ENCODE measurements at regions of chr2 and their contacts with region 1.

Region 1: GRCh38 chr2:32772638-32773447 is 145.0 kb downstream of the TTC27 start:
- DNase-seq: no peak
- H3K4me3 ChIP-seq: no peak overlapping the region
- H3K27ac ChIP-seq: no peak overlapping the region
- H3K4me1 ChIP-seq: no peaks in the 10 kb centered on the region
- H3K27me3 ChIP-seq: no peaks in the 10 kb centered on the region
- CTCF ChIP-seq: peak in 2 of 3 donors; percentile 18 to 47
- EP300 ChIP-seq: no peak
- POLR2A ChIP-seq: no peak

Region 2: GRCh38 chr2:32553829-32554432 is 218.9 kb before region 1 on chr2:
- intact Hi-C with region 1: no loop called
- DNase-seq: no peak
- H3K4me3 ChIP-seq: no peak overlapping the region
- H3K27ac ChIP-seq: no peak overlapping the region
- H3K4me1 ChIP-seq: no peaks in the 10 kb centered on the region
- H3K27me3 ChIP-seq: no peaks in the 10 kb centered on the region
- CTCF ChIP-seq: peak; percentile 32 to 54 (median 49)
- EP300 ChIP-seq: no peak
- POLR2A ChIP-seq: no peak

Region 3: GRCh38 chr2:32946314-32947075 is 173.7 kb after region 1 on chr2 and contains the start of gene LTBP1:
- intact Hi-C with region 1: loop called in 1 of 4 experiments (anchors 10 kb)
- DNase-seq: peak; percentile 34 to 64 (median 54)
- H3K4me3 ChIP-seq: peak within 1 kb of the TSS; percentile 63
- H3K27ac ChIP-seq: peak within 1 kb of the TSS in 1 of 2 donors; percentile 76
- H3K4me1 ChIP-seq: no peaks in the 10 kb centered on the region
- H3K27me3 ChIP-seq: no peaks in the 10 kb centered on the region
- CTCF ChIP-seq: peak; percentile 6 to 28 (median 22)
- EP300 ChIP-seq: no peak
- POLR2A ChIP-seq: no peak
- total RNA-seq, gene LTBP1: 13.5 to 74.8 (median 41.8) TPM

Region 4: GRCh38 chr2:33589444-33589843 is 816.6 kb after region 1 on chr2:
- intact Hi-C with region 1: loop called in 1 of 4 experiments (anchors 5 kb)
- DNase-seq: no peak
- H3K4me3 ChIP-seq: no peak overlapping the region
- H3K27ac ChIP-seq: peak overlapping the region in 1 of 2 donors; percentile 3
- H3K4me1 ChIP-seq: peaks cover 7% of the 10 kb centered on the region
- H3K27me3 ChIP-seq: no peaks in the 10 kb centered on the region
- CTCF ChIP-seq: no peak
- EP300 ChIP-seq: no peak
- POLR2A ChIP-seq: no peak

Measured in ovary (tissue), 10 donors.